Endothelial cell of umbilical vein (primary cell): ENCODE measurements at regions of chr6 and their contacts with region 1.

Region 1: DNA sequence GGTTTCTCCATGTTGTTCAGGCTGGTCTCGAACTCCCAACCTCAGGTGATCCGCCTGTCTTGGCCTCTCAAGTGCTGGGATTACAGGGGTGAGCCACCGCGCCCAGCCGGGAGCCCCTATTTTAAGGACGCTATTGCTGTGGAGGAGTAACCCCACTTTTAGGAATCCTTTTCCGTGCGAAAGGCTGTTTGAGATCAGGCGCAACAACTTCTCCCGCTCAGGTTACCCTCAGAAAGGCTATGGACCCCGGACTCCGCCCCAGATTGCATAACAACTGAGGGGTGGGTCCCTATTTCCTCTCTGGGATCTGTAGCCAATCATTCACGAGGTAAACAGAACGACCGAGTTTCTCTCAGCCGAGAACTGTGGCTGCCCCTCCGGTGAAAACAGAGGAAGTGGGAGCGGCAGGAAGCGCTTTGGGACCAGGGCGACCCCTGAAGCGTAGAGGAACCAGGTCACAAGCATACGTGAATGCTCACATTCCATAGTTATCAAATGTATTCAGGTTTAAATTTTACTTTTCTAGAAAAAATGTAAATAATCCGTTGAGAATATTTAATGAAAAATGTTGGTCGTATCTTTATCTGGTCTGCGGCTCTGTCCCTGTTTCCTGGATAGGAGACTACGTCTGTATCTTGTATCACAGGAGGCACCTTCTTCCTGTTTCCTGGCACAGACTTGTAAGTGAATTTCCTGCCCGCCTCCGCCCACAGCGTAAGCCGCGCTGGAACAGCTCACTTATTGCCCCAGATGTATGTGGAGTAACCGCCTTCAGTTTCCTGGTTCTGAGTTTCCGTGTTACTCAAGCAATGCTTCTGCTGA is 26.8 kb downstream of the HLA-E start:
- DNase-seq: peak; percentile 99
- H3K4me3 ChIP-seq: peak overlapping the region in 2 of 3 experiments; percentile 18 to 20
- H3K27ac ChIP-seq: peak overlapping the region; percentile 98
- H3K4me1 ChIP-seq: peaks cover 6% of the 10 kb centered on the region
- H3K27me3 ChIP-seq: no peaks in the 10 kb centered on the region
- CTCF ChIP-seq: no peak
- POLR2A ChIP-seq: peak; percentile 64

Region 2: GRCh38 chr6:30238174-30238795 is 277.9 kb before region 1 on chr6:
- CTCF ChIA-PET with region 1: no interaction called
- POLR2A ChIA-PET with region 1: no interaction called
- dilution Hi-C with region 1: no loop called
- intact Hi-C with region 1: no loop called
- DNase-seq: no peak
- H3K4me3 ChIP-seq: no peak overlapping the region
- H3K27ac ChIP-seq: no peak overlapping the region
- H3K4me1 ChIP-seq: no peaks in the 10 kb centered on the region
- H3K27me3 ChIP-seq: peaks cover 7 to 17% of the 10 kb centered on the region in 2 experiments
- CTCF ChIP-seq: peak in 1 of 2 donors; percentile 34
- POLR2A ChIP-seq: no peak

Region 3: DNA sequence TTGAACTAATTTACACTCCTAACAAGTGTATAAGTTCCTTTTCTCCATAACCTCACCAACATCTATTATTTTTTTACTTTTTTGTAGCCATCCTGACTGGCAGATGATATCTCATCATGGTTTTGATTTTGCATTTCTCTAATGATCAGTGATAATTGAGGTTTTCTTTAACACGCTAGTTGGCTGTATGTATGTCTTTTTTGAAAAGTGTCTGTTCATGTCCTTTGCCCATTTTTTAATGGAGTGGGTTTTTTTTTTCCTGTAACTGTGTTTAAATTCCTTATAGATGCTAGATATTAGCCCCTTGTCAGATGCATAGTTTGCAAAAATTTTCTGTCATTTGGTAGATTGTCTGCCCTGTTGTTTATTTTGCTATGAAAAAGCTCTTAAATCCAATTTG is 229.0 kb before region 1 on chr6:
- CTCF ChIA-PET with region 1: no interaction called
- POLR2A ChIA-PET with region 1: no interaction called
- dilution Hi-C with region 1: no loop called
- intact Hi-C with region 1: no loop called
- DNase-seq: no peak
- H3K4me3 ChIP-seq: no peak overlapping the region
- H3K27ac ChIP-seq: no peak overlapping the region
- H3K4me1 ChIP-seq: no peaks in the 10 kb centered on the region
- H3K27me3 ChIP-seq: no peaks in the 10 kb centered on the region
- CTCF ChIP-seq: no peak
- POLR2A ChIP-seq: no peak

Region 4: DNA sequence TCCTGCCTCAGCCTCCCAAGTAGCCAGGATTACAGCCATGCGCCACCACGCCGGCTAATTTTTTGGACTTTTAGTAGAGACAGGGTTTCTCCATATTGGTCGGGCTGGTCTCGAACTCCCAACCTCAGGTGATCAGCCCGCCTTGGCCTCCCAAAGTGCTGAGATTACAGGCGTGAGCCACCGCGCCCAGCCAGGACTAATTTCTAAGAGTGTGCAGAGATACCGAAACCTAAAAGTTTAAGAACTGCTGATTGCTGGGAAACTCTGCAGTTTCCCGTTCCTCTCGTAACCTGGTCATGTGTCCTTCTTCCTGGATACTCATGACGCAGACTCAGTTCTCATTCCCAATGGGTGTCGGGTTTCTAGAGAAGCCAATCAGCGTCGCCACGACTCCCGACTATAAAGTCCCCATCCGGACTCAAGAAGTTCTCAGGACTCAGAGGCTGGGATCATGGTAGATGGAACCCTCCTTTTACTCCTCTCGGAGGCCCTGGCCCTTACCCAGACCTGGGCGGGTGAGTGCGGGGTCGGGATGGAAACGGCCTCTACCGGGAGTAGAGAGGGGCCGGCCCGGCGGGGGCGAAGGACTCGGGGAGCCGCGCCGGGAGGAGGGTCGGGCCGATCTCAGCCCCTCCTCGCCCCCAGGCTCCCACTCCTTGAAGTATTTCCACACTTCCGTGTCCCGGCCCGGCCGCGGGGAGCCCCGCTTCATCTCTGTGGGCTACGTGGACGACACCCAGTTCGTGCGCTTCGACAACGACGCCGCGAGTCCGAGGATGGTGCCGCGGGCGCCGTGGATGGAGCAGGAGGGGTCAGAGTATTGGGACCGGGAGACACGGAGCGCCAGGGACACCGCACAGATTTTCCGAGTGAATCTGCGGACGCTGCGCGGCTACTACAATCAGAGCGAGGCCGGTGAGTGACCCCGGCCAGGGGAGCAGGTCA is 26.8 kb before region 1 on chr6 and contains the start of gene HLA-E:
- CTCF ChIA-PET with region 1: interaction called, 3 read pairs
- POLR2A ChIA-PET with region 1: interaction called, 4 read pairs
- dilution Hi-C with region 1: no loop called
- intact Hi-C with region 1: loop called (anchors 1 kb)
- DNase-seq: peak; percentile 99
- H3K4me3 ChIP-seq: peak within 1 kb of the TSS; percentile 76 to 94 (median 92)
- H3K27ac ChIP-seq: peak within 1 kb of the TSS; percentile 92
- H3K4me1 ChIP-seq: peaks cover 20% of the 10 kb centered on the region
- H3K27me3 ChIP-seq: no peaks in the 10 kb centered on the region
- CTCF ChIP-seq: no peak
- POLR2A ChIP-seq: peak; percentile 99
- total RNA-seq, gene HLA-E: 249 and 271 TPM in 2 replicates

Region 5: GRCh38 chr6:30500421-30501355 is 15.5 kb before region 1 on chr6:
- CTCF ChIA-PET with region 1: interaction called, 11 read pairs
- POLR2A ChIA-PET with region 1: interaction called, 10 read pairs
- dilution Hi-C with region 1: no loop called
- intact Hi-C with region 1: loop called (anchors 1 kb)
- DNase-seq: peak; percentile 94
- H3K4me3 ChIP-seq: peak overlapping the region in 1 of 3 experiments; percentile 38
- H3K27ac ChIP-seq: peak overlapping the region; percentile 79
- H3K4me1 ChIP-seq: peaks cover 31% of the 10 kb centered on the region
- H3K27me3 ChIP-seq: no peaks in the 10 kb centered on the region
- CTCF ChIP-seq: no peak
- POLR2A ChIP-seq: no peak

Region 6: GRCh38 chr6:30533460-30534294 is 17.5 kb after region 1 on chr6:
- CTCF ChIA-PET with region 1: interaction called, 16 read pairs
- POLR2A ChIA-PET with region 1: interaction called, 4 read pairs
- dilution Hi-C with region 1: no loop called
- intact Hi-C with region 1: loop called (anchors 1 kb)
- DNase-seq: no peak
- H3K4me3 ChIP-seq: no peak overlapping the region
- H3K27ac ChIP-seq: no peak overlapping the region
- H3K4me1 ChIP-seq: peaks cover 6% of the 10 kb centered on the region
- H3K27me3 ChIP-seq: no peaks in the 10 kb centered on the region
- CTCF ChIP-seq: no peak
- POLR2A ChIP-seq: no peak

Region 7: DNA sequence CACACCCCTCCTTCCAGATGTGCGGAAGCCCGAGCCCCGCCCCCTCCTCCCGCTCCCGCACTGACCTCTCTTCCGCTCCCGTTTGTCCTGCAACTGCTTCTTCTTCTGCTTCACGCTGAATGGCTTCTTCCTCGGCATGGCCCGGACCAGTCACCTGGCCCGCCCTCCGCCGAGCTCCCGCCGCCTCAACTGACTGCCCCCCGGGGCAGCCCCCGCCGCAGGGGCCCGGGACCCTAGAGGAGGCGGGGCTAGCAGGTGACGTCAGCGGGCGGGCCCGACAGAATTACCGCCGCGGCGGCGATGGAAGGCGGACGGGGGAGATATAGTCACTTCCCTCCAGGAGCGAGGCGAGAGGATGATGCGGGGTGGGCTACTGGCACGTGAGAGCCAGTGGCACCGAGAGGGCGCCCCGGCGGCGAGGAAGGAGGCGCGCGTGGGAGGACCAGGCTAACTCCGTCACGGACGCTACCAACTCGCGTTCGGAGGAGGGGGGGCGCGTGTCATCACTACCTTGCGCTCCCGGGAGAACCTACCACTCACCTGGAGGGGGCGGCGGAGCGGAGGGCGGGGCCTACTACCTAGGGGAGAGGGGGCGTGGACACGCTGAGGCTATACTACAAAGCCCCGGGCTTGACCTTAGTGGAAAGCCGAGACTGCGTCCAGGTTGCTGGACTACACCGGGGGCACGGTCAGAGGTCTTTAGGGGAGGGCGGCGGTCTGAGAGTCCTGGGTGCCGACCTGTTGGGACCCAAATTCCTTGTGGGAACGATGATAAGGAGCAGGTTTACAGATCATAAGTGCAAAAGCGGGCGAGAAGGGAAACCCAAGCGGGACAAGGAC is 40.1 kb after region 1 on chr6 and contains the start of gene GNL1:
- CTCF ChIA-PET with region 1: no interaction called
- POLR2A ChIA-PET with region 1: no interaction called
- dilution Hi-C with region 1: no loop called
- intact Hi-C with region 1: loop called (anchors 1 kb)
- DNase-seq: peak; percentile 88
- H3K4me3 ChIP-seq: peak within 1 kb of the TSS; percentile 39 to 93 (median 52)
- H3K27ac ChIP-seq: peak within 1 kb of the TSS; percentile 84
- H3K4me1 ChIP-seq: peaks cover 19% of the 10 kb centered on the region
- H3K27me3 ChIP-seq: no peaks in the 10 kb centered on the region
- CTCF ChIP-seq: no peak
- POLR2A ChIP-seq: no peak
- total RNA-seq, gene GNL1: 87.3 and 103 TPM in 2 replicates